PC-3 (cell line): ENCODE measurements at regions of chr11 and their contacts with region 1.

Region 1: DNA sequence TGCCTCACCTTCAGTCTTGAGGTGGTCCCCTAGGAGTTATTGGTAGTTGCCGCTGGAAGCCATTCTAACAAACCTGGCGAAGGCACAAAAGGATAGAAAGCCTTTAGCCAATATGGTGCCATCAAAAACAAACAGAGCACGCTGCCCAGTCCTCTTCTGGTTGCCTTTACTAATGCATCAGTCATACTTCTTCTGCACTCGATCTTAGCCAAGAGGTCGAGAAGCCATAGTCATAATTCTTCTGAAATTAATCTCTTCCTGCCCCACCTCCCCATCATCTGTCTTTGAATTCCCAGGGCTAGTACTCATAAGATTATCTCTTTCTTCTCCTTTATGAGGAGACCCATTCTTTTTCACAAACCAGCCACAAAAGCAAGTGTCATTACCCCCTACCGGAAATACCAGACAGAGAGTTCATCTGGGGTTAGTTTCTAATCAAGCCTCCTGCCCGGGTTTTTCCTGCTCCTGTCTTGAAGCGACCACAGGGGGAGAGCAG is 21.4 kb upstream of the EHF start:
- DNase-seq: peak; percentile 93
- ATAC-seq: peak; percentile 87
- H3K4me3 ChIP-seq: no peak overlapping the region
- H3K27ac ChIP-seq: peak overlapping the region; percentile 92
- H3K4me1 ChIP-seq: peaks cover 32% of the 10 kb centered on the region
- H3K27me3 ChIP-seq: no peaks in the 10 kb centered on the region
- CTCF ChIP-seq: no peak

Region 2: GRCh38 chr11:34640050-34640923 is 40.8 kb after region 1 on chr11:
- CTCF ChIA-PET with region 1: no interaction called
- POLR2A ChIA-PET with region 1: no interaction called
- intact Hi-C with region 1: loop called (anchors 2 kb)
- DNase-seq: peak; percentile 95
- ATAC-seq: peak; percentile 85
- H3K4me3 ChIP-seq: peak overlapping the region; percentile 20; the same call in 1 of the 2 replicates
- H3K27ac ChIP-seq: peak overlapping the region; percentile 97
- H3K4me1 ChIP-seq: peaks cover 70% of the 10 kb centered on the region
- H3K27me3 ChIP-seq: no peaks in the 10 kb centered on the region
- CTCF ChIP-seq: no peak